ENCODE measurements at regions of chr7 and their contacts with region 1.

Region 1: DNA sequence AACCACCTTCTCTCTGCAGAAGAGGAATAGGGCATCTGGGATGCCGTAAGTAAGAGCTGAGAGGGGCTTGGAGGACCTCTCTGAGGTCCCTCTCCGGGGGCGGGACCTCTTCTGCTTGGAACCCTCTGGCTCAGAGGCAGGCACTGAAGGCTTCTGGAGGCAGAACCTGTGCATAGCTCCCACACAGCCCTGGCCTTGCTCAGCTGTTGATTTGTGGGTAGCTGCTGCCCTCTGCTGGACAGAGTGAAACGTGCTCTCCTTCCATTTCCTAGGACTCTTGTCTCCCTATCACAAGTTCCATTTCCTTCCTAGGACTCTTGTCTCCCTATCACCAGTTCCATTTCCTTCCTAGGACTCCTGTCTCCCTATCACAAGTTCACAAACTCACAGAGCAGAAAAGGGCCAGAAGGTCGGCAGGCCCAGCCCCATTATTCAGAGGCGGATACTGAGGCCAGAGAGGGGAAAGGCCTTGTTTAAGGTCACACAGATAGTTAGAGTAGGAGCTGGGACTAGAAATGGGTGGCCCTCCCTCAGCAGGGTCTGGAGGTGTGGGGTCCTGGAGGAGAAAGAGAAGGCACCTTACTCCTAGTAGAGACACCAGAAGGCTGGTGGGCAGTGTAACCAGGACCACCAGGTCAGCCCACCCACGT is 30.3 kb upstream of the GARS1 start:
- DNase-seq: peak; percentile 78 to 90
- H3K4me3 ChIP-seq: no peak overlapping the region
- H3K27ac ChIP-seq: no peak overlapping the region
- H3K4me1 ChIP-seq: peaks cover 2 to 7% (median 5%) of the 10 kb centered on the region in 4 experiments; a peak in 5 of 7 replicates
- H3K27me3 ChIP-seq: no peaks in the 10 kb centered on the region
- CTCF ChIP-seq: peak; percentile 79 to 97 (median 90)
- EP300 ChIP-seq: no peak
- POLR2A ChIP-seq: no peak
- RAD21 ChIP-seq: peak; percentile 97 to 99

Region 2: DNA sequence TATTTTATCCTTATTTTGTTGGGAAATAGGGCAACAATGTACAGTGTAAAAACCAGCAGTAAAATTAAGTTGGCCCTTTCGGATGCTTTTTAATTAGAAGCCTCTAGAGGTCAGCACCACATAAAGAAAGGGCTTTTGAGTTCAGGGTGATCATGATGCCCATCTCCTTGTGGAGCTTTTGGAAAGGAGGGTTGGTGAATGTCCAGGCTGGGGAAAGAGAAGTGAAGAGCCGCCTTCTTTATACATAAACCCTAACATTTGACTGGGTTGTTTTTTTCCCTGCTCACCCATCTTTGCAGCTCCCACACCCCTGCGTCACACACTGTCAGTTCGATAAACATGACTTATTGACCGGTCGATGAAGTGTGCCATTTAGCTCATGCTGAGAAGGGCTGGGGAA is 399.8 kb before region 1 on chr7:
- CTCF ChIA-PET with region 1: interaction called, 14 read pairs
- POLR2A ChIA-PET with region 1: no interaction called
- DNase-seq: no peak
- H3K4me3 ChIP-seq: no peak overlapping the region
- H3K27ac ChIP-seq: no peak overlapping the region
- H3K4me1 ChIP-seq: peaks cover 13 to 27% (median 26%) of the 10 kb centered on the region in 4 experiments
- H3K27me3 ChIP-seq: peaks cover 0 to 12% (median 6%) of the 10 kb centered on the region in 4 experiments; a peak in 5 of 7 replicates
- CTCF ChIP-seq: peak in 2 of 3 experiments; percentile 66 to 75; a peak in 3 of 4 replicates
- EP300 ChIP-seq: no peak
- POLR2A ChIP-seq: no peak
- RAD21 ChIP-seq: peak; percentile 86 to 89

Region 3: GRCh38 chr7:30459591-30460257 is 104.6 kb before region 1 on chr7:
- CTCF ChIA-PET with region 1: interaction called, 10 read pairs
- POLR2A ChIA-PET with region 1: no interaction called
- DNase-seq: no peak
- H3K4me3 ChIP-seq: no peak overlapping the region
- H3K27ac ChIP-seq: no peak overlapping the region
- H3K4me1 ChIP-seq: peaks cover 0 to 2% (median 0%) of the 10 kb centered on the region in 4 experiments; a peak in 2 of 7 replicates
- H3K27me3 ChIP-seq: no peaks in the 10 kb centered on the region
- CTCF ChIP-seq: no peak
- EP300 ChIP-seq: no peak
- POLR2A ChIP-seq: no peak
- RAD21 ChIP-seq: no peak

Region 4: DNA sequence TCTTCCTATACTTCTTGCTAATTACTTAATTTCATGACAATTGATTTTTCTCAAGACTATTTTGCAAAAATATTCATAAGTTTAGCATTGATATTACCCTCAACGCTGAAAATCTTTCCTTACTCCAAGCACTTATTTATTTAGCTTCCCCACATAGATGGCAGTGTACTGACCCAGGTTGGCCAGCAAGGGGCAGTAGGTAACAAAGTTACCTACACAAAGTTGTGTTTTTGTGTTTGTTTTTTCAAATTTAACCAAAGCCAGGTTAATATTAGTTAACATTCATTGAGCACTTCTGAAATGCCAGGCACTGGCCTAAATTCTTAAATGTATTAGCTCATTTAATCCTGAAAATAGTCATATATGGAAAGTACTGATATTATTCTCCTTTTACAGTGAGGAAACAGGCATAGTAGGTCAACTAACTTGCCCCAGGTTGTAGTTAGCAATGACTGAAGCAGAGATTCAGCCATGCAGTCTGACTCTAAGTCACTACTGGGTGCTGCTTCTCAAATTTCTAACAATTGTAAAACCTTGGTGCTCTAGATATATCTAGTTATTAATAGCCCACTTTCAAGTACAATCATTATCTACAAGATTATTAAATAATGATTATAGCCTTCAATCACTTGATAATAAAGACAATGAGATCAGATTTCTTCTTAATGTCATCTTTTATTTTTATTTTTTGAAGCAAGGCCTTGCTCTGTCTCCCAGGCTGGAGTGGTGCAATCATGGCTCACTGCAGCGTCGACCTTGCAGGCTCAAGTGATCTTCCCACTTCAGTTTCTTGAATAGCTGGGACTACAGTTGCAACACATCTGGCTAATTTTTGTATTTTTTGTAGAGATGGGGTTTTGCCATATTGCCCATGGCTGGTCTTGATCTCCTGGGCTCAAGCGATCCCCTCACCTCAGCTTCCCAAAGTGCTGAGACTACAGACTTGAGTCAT is 54.0 kb before region 1 on chr7:
- CTCF ChIA-PET with region 1: interaction called, 63 read pairs
- POLR2A ChIA-PET with region 1: interaction called, 6 read pairs
- DNase-seq: no peak
- H3K4me3 ChIP-seq: no peak overlapping the region
- H3K27ac ChIP-seq: no peak overlapping the region
- H3K4me1 ChIP-seq: no peaks in the 10 kb centered on the region
- H3K27me3 ChIP-seq: no peaks in the 10 kb centered on the region
- CTCF ChIP-seq: peak in 2 of 3 experiments; percentile 74 to 75; a peak in 3 of 4 replicates
- EP300 ChIP-seq: no peak
- POLR2A ChIP-seq: no peak
- RAD21 ChIP-seq: peak; percentile 74 to 75

Region 5: DNA sequence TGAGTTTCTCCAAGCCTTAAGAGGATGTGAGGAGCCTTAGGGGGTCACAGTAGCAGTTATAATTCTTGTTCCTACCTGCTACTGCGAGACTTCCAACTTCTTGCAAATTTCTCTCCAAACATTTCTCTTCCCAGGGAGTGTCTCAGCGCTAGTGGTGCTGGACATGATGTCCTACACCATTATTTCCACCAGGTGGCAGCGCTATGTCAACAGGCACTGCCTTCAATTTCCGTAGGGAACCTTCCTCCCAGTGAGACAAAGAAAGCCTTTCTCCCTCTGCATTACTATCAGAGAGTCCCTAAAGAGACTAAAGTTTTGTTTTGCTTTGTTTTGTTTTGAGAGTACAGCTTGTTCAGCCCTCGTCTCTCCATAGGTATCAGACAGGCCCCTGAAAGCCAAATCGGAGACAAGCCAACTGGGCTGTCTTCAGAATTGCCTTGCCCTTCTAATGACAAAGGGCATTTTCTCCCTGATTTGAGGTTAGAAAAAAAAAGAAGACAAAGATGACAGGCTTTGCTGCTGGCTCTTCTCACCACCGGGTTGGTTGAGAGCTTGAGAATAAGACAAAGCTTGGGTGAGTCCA is 15.5 kb before region 1 on chr7:
- CTCF ChIA-PET with region 1: interaction called, 214 read pairs
- POLR2A ChIA-PET with region 1: interaction called, 8 read pairs
- DNase-seq: peak in 1 of 2 experiments; percentile 66
- H3K4me3 ChIP-seq: no peak overlapping the region; a peak in 1 of 8 replicates
- H3K27ac ChIP-seq: no peak overlapping the region
- H3K4me1 ChIP-seq: peaks cover 0 to 8% (median 1%) of the 10 kb centered on the region in 4 experiments; a peak in 2 of 7 replicates
- H3K27me3 ChIP-seq: no peaks in the 10 kb centered on the region
- CTCF ChIP-seq: peak; percentile 71 to 89 (median 80)
- EP300 ChIP-seq: no peak
- POLR2A ChIP-seq: no peak
- RAD21 ChIP-seq: peak; percentile 75 to 78

Region 6: GRCh38 chr7:30708976-30709375 is 144.6 kb after region 1 on chr7:
- CTCF ChIA-PET with region 1: no interaction called
- POLR2A ChIA-PET with region 1: no interaction called
- DNase-seq: no peak
- H3K4me3 ChIP-seq: no peak overlapping the region
- H3K27ac ChIP-seq: no peak overlapping the region; the same call in 1 of the 2 replicates
- H3K4me1 ChIP-seq: no peaks in the 10 kb centered on the region; a peak in 2 of 7 replicates
- H3K27me3 ChIP-seq: no peaks in the 10 kb centered on the region
- CTCF ChIP-seq: no peak
- EP300 ChIP-seq: no peak
- POLR2A ChIP-seq: no peak
- RAD21 ChIP-seq: no peak